CD8-positive, alpha-beta T cell (primary cell): ENCODE measurements at regions of chr1 and their contacts with region 1.

Region 1: DNA sequence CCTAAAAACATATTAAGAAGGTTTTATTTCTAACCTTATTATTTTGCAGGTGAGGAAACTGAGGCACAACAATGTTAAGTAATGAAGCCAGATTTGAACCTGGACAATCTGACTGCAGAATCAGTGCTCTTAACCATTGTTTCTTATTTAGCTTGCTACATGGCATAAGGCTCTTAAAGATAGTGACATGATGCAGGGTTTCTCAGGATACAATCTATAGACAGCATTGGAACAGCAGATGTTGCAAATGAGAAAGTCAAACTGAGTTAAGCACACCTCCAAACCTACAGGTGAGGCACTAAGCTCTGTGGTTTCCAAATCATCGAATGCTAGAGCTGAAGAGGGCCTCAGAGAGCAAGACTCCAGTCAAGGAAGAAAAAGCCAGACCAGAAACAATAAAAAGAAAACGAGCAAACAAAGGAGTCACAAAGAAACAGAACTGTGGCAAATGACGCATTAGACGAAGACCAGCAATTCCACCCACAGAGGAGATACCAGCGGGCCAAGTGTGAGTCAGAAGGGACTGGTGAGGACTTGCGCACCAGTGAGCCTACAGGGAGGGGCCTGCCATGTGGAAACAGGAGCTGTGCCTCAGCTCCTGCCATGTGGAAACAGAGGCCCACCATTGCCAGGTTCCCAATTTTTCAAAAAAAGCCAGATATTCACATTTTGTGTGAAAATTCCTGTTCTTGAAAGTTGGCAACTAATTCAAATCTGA is 14.4 kb downstream of the CD58 start:
- DNase-seq: peak; percentile 20 to 89 (median 65)
- ATAC-seq: peak; percentile 93
- H3K4me3 ChIP-seq: no peak overlapping the region
- H3K4me3 Mint-ChIP-seq: no peak overlapping the region
- H3K27ac ChIP-seq: peak overlapping the region; percentile 12 to 68
- H3K27ac Mint-ChIP-seq: peak overlapping the region; percentile 73
- H3K4me1 ChIP-seq: no peaks in the 10 kb centered on the region
- H3K4me1 Mint-ChIP-seq: peaks cover 59% of the 10 kb centered on the region
- H3K27me3 ChIP-seq: no peaks in the 10 kb centered on the region
- H3K27me3 Mint-ChIP-seq: no peaks in the 10 kb centered on the region
- CTCF ChIP-seq: no peak

Region 2: GRCh38 chr1:116514708-116515525 is 41.5 kb before region 1 on chr1:
- CTCF ChIA-PET with region 1: no interaction called
- POLR2A ChIA-PET with region 1: interaction called, 7 read pairs
- intact Hi-C with region 1: loop called in 1 of 2 experiments (anchors 2 kb)
- DNase-seq: peak; percentile 28 to 89 (median 62)
- ATAC-seq: peak; percentile 83
- H3K4me3 ChIP-seq: peak overlapping the region; percentile 4 to 31
- H3K4me3 Mint-ChIP-seq: peak overlapping the region; percentile 61
- H3K27ac ChIP-seq: peak overlapping the region; percentile 50 to 96
- H3K27ac Mint-ChIP-seq: peak overlapping the region; percentile 94
- H3K4me1 ChIP-seq: peaks cover 29% of the 10 kb centered on the region
- H3K4me1 Mint-ChIP-seq: peaks cover 50% of the 10 kb centered on the region
- H3K27me3 ChIP-seq: no peaks in the 10 kb centered on the region
- H3K27me3 Mint-ChIP-seq: no peaks in the 10 kb centered on the region
- CTCF ChIP-seq: no peak

Region 3: DNA sequence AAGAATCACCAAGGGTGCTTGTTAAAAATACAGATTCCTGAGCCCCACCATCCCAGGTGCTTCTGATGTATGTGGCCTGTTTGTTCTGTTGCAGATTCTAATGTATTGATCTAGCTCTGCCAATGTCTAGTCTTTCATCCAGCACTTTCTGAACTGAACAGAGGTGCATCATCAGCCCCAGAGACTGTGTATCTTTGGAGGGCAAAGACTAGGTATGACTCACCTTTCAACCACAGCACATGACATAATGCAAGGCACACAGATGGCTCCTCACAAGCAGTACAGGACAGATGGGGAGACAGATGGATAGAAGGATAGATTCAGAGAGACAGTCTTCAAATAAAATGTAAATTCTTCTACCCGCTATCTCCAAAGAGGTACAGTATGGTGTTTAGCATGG is 17.9 kb before region 1 on chr1:
- CTCF ChIA-PET with region 1: no interaction called
- POLR2A ChIA-PET with region 1: no interaction called
- intact Hi-C with region 1: no loop called
- DNase-seq: peak in 6 of 9 experiments; percentile 13 to 48 (median 36)
- ATAC-seq: peak; percentile 90
- H3K4me3 ChIP-seq: no peak overlapping the region
- H3K4me3 Mint-ChIP-seq: no peak overlapping the region
- H3K27ac ChIP-seq: no peak overlapping the region
- H3K27ac Mint-ChIP-seq: no peak overlapping the region
- H3K4me1 ChIP-seq: no peaks in the 10 kb centered on the region
- H3K4me1 Mint-ChIP-seq: peaks cover 17% of the 10 kb centered on the region
- H3K27me3 ChIP-seq: no peaks in the 10 kb centered on the region
- H3K27me3 Mint-ChIP-seq: no peaks in the 10 kb centered on the region
- CTCF ChIP-seq: no peak

Region 4: DNA sequence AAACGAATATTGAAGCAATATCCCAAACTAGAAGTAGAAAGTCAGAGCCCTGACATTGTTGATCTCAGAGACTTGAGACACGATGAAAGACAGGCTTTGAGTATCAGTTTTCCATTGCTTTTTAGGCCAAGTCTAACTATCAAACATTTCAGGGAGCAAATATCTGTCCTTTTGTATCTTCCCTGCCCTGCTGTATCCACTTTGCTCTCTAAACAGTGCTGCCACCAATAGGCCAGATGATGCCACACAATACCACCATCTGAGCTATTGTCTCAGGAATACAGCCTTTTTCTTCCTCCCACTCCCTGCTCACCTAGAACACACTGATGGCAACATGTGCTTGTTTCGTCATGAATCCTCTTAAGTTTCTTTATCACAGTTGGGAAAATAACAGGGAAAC is 1691.1 kb after region 1 on chr1:
- CTCF ChIA-PET with region 1: no interaction called
- POLR2A ChIA-PET with region 1: no interaction called
- intact Hi-C with region 1: no loop called
- DNase-seq: no peak
- ATAC-seq: no peak
- H3K4me3 ChIP-seq: no peak overlapping the region
- H3K4me3 Mint-ChIP-seq: no peak overlapping the region
- H3K27ac ChIP-seq: no peak overlapping the region
- H3K27ac Mint-ChIP-seq: no peak overlapping the region
- H3K4me1 ChIP-seq: no peaks in the 10 kb centered on the region
- H3K4me1 Mint-ChIP-seq: no peaks in the 10 kb centered on the region
- H3K27me3 ChIP-seq: no peaks in the 10 kb centered on the region
- H3K27me3 Mint-ChIP-seq: no peaks in the 10 kb centered on the region
- CTCF ChIP-seq: no peak